ENCODE measurements at regions of chr12 and their contacts with region 1.

Region 1: DNA sequence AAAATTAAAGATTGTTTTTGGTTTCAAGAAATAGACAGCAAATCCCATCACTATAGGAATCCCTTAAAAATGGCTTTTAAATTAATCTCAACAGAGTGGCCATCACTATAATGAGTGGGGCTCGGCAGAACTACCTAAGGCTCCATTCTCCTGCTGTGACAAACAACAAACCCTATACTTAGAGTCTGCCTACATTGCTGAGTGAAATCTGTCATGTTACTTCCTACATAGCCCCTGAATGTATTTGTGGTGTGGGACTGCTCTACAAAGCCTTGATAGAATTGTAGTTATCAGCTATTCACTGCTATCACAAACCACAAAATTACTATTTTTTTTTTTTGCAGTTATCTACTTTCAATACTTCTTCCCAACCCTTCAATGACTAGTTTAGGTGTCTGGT is 538.7 kb upstream of the ATXN7L3B start:
- DNase-seq: no peak
- ATAC-seq: no peak

Region 2: GRCh38 chr12:74043324-74043723 is 44.4 kb after region 1 on chr12:
- intact Hi-C with region 1: no loop called
- DNase-seq: no peak
- ATAC-seq: no peak

Region 3: DNA sequence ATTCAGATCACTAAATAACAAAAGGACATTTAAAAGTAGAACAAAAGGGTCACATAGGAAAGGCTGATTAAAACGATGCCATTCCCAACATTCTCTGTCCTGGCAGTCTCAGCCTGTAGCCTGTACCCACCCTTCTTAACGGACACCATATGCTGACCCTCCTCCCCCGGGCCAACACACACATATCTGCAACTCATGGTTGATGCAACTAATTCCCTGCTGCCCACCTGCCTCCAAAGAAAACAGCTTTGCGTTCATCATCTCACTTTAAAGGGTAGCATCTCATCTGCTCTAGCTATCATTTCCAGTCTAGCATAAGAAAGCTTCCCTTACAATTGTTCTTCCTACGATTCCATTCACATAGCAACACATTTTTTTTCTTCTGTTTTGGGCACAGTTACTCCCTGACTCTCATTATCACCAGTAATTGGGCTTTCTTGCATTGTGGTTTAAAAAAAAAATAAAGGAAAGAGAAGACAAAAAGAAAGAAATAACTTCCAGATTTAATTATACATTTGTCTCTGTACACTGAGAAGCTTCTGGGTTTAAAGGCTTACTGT is 1117.8 kb after region 1 on chr12:
- intact Hi-C with region 1: loop called (anchors 5 kb)
- DNase-seq: no peak
- ATAC-seq: no peak

Measured in sciatic nerve (tissue), 2 donors.